HepG2 (cell line): ENCODE measurements at regions of chr11 and their contacts with region 1.

Region 1: DNA sequence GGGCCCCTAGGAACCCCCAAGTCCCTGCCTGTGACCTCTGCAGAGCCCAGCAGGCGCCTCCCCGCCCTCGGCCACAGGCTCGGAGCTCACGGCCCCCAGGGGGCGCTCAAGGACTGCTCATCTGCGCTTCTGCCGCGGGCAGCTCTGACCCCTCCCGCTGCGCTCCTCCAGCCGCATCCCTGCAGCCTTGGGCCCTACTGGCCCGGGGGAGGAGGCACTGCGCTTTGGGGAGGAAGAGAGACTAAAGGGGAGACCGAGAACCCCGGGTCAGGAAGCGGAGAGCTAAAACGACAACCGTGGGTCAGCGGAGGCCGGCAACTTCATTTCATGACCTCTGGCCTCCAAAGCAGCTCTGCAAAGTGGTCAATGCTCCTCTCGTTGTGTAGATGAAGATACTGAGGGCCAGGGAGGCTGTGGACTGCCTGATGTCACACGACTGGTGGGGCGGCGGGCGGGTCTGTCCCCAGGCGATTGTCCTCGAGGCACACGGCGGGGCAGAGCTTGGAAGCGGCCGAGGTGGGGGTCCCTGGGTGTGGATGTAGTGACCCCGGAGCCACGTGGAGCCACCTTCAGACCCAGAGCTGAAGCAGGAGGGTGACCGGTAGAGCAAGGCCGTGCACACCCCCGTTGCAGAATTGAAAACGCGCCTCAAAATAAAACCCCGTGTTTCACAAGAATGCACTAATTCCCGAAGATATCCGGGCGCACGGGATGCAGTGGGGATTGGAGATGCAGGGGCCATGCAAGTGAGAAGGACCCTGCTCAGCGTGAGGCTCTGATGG is 2.7 kb upstream of the KRTAP5-6 start:
- DNase-seq: peak; percentile 53
- ATAC-seq: peak; percentile 38
- H3K4me3 ChIP-seq: peak overlapping the region in 2 of 3 experiments; percentile 14 to 58; a peak in 3 of 6 replicates
- H3K27ac ChIP-seq: peak overlapping the region; percentile 100
- H3K4me1 ChIP-seq: peaks cover 69% of the 10 kb centered on the region
- H3K27me3 ChIP-seq: peaks cover 0 to 3% of the 10 kb centered on the region in 2 experiments; a peak in 3 of 5 replicates
- CTCF ChIP-seq: peak; percentile 99
- EP300 ChIP-seq: peak in 1 of 2 experiments; percentile 38; a peak in 1 of 4 replicates
- POLR2A ChIP-seq: no peak
- RAD21 ChIP-seq: peak; percentile 97

Region 2: GRCh38 chr11:1659506-1659905 is 34.7 kb before region 1 on chr11:
- CTCF ChIA-PET with region 1: interaction called, 11 read pairs
- POLR2A ChIA-PET with region 1: interaction called, 122 read pairs
- in situ Hi-C with region 1: loop called (anchors 5 kb)
- intact Hi-C with region 1: no loop called
- DNase-seq: no peak
- ATAC-seq: no peak
- H3K4me3 ChIP-seq: no peak overlapping the region
- H3K27ac ChIP-seq: peak overlapping the region; percentile 84
- H3K4me1 ChIP-seq: peaks cover 82% of the 10 kb centered on the region
- H3K27me3 ChIP-seq: no peaks in the 10 kb centered on the region
- CTCF ChIP-seq: no peak
- EP300 ChIP-seq: no peak
- POLR2A ChIP-seq: no peak
- RAD21 ChIP-seq: no peak

Region 3: DNA sequence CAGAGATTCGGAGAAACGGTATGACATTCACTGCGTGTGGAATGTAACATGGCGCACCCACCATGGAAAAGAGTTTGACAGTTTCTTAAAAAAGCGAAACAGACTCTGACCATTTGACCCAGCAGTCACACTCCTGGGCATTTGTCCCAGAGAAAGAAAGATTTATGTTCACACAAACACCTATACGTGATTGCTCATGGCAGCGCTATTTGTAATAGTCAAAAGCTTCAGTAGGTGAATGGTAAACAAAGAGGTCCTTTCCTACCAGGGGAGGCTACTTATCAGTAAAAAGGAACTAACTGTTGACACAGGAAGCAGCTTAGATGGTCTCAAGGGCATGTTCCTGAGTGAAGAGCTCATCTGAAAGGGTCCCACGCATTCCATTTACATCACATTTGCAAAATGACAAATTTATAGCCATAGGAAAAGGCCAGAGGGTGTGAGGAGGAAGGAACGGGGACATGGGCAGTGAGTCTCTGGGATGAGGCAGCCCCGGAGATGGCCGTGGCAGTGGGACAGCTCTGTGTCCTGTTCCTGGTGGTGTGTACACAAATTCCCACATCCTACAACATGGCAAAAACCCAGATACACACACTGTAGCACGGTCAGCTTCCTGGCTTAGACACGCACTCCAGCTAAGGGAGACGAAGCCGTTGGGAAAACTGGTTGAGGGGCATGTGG is 11.9 kb before region 1 on chr11:
- CTCF ChIA-PET with region 1: no interaction called
- POLR2A ChIA-PET with region 1: interaction called, 141 read pairs
- in situ Hi-C with region 1: no loop called
- intact Hi-C with region 1: loop called (anchors 2 kb)
- DNase-seq: peak; percentile 59
- ATAC-seq: peak; percentile 30
- H3K4me3 ChIP-seq: no peak overlapping the region
- H3K27ac ChIP-seq: peak overlapping the region; percentile 66
- H3K4me1 ChIP-seq: peaks cover 55% of the 10 kb centered on the region
- H3K27me3 ChIP-seq: no peaks in the 10 kb centered on the region
- CTCF ChIP-seq: no peak
- EP300 ChIP-seq: peak in 1 of 2 experiments; percentile 98; a peak in 2 of 4 replicates
- POLR2A ChIP-seq: peak in 1 of 2 experiments; percentile 58; a peak in 2 of 4 replicates
- RAD21 ChIP-seq: no peak

Region 4: GRCh38 chr11:1827095-1827813 is 133.0 kb after region 1 on chr11:
- CTCF ChIA-PET with region 1: interaction called, 44 read pairs
- POLR2A ChIA-PET with region 1: interaction called, 25 read pairs
- in situ Hi-C with region 1: loop called (anchors 5 kb)
- intact Hi-C with region 1: loop called (anchors 2 kb)
- DNase-seq: peak; percentile 70
- ATAC-seq: peak; percentile 14
- H3K4me3 ChIP-seq: peak overlapping the region in 1 of 3 experiments; percentile 32; a peak in 1 of 6 replicates
- H3K27ac ChIP-seq: no peak overlapping the region
- H3K4me1 ChIP-seq: peaks cover 78% of the 10 kb centered on the region
- H3K27me3 ChIP-seq: peaks cover 0 to 2% of the 10 kb centered on the region in 2 experiments; a peak in 1 of 5 replicates
- CTCF ChIP-seq: peak; percentile 23; the same call in 1 of the 2 replicates
- EP300 ChIP-seq: no peak
- POLR2A ChIP-seq: no peak
- RAD21 ChIP-seq: no peak

Region 5: DNA sequence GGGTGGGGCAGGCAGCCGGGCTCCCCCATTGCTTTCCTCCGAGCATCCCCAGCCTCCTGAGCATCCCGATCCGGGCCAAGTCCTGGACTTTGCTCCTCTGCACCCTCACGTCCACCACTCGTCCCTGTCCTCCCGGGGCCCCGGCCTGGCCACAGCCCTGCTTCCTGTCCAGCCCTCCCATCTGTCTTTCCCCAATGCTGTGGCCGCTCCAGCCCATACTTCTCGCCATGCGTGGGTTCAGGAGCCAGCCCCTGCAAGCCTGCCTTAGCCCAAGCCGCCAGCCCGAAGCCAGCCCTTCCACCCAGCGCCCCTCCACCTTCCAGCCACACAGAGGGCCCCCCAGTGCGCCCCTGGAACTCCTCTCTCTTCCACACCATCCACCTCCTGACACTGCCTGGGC is 276.7 kb after region 1 on chr11:
- CTCF ChIA-PET with region 1: no interaction called
- POLR2A ChIA-PET with region 1: interaction called, 11 read pairs
- in situ Hi-C with region 1: no loop called
- intact Hi-C with region 1: no loop called
- DNase-seq: no peak
- ATAC-seq: peak; percentile 14
- H3K4me3 ChIP-seq: no peak overlapping the region
- H3K27ac ChIP-seq: no peak overlapping the region
- H3K4me1 ChIP-seq: no peaks in the 10 kb centered on the region
- H3K27me3 ChIP-seq: no peaks in the 10 kb centered on the region
- CTCF ChIP-seq: no peak
- EP300 ChIP-seq: no peak
- POLR2A ChIP-seq: no peak
- RAD21 ChIP-seq: no peak